Mammary epithelial cell (primary cell): ENCODE measurements at regions of chr1 and their contacts with region 1.

Region 1: DNA sequence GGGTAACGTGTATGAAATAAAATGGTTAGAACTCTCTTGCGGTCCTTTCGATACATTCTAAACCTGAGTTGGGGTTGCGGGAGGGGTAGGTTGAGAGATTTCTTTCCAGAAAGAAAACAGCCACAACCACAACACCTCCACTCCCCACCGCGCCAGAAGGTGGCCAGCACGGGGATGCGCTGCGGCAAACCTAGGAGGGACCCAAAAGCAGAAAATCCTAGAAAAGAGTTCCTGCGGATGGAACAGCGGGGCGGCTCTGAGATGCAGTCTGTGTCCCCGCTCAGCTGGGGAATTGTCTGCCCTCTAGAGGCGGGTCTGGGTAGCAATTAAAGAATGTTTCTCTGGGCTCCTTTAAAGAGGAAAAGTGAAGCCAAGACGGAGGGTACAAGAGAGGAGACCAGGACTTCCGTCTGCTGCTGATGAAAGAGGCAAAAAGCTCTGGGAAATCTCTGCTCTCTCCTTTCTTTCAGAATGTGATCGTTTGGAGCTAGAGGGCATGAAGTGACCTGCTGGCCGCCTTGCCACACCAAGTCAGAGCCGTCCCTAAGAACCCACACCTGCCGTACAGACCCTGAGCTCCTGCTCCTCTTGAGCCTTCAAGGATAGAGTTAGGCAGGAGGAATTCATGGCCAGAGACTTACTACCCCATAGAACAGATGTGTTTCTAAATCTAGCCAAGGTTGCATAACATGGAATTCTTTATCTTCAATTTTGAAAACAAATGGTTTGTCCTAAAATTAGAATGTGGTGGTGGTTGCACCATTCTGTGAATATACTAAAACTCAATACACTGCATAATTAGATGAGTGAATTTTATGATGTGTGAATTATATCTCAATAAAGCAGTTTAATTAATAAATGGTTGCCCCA is 46.5 kb upstream of the COA6 start:
- DNase-seq: peak; percentile 41
- H3K4me3 ChIP-seq: no peak overlapping the region
- H3K27ac ChIP-seq: no peak overlapping the region
- H3K4me1 ChIP-seq: no peaks in the 10 kb centered on the region
- H3K27me3 ChIP-seq: no peaks in the 10 kb centered on the region
- CTCF ChIP-seq: peak; percentile 81

Region 2: DNA sequence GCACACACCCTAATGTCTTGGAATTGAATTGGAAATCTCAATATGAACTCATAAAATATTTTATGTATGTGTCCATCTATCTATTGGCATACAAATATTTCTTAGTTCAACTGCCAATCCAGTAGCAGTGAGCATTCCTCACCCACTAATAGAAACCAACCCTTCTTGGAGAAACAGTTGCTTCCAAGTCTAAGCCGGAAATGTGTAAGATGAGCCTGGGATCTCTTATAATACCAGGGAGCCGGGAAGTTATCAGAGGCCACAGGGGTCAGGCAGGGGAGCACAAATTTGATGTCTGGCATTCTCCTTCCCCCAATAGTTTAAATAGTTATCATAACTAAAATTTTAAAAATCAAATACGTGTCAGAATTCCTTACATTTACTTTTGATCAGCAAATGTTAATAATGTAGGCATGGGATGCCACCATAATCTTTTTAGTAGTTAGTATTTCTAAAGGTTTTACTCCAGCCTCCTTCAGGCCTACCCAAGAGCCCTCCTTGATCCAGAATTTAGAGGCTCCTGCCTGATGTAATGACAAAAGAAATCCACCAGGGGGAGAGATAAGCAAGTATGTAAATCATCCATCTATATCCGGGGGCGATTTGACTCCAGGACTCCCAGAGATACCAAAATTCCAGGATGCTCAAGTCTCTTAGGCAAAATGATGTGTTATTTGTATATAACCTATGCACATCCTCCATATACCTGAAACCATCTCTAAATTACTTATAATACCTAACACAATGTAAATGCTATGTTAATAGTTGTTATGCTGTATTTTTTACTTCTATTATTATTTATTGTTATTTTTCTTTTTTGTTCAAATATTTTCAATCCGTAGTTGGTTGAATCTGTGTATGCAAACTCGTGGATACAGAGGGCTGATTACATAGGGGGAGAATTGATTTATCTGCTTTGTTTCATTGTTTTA is 172.1 kb before region 1 on chr1:
- CTCF ChIA-PET with region 1: no interaction called
- dilution Hi-C with region 1: no loop called
- in situ Hi-C with region 1: no loop called
- intact Hi-C with region 1: loop called (anchors 1 kb)
- DNase-seq: peak; percentile 73
- H3K4me3 ChIP-seq: no peak overlapping the region
- H3K27ac ChIP-seq: no peak overlapping the region
- H3K4me1 ChIP-seq: peaks cover 3% of the 10 kb centered on the region
- H3K27me3 ChIP-seq: no peaks in the 10 kb centered on the region
- CTCF ChIP-seq: peak; percentile 73 to 80

Region 3: GRCh38 chr1:234281826-234282489 is 44.8 kb before region 1 on chr1:
- CTCF ChIA-PET with region 1: no interaction called
- dilution Hi-C with region 1: no loop called
- in situ Hi-C with region 1: no loop called
- intact Hi-C with region 1: no loop called
- DNase-seq: no peak
- H3K4me3 ChIP-seq: no peak overlapping the region
- H3K27ac ChIP-seq: no peak overlapping the region
- H3K4me1 ChIP-seq: no peaks in the 10 kb centered on the region
- H3K27me3 ChIP-seq: no peaks in the 10 kb centered on the region
- CTCF ChIP-seq: no peak